Naive thymus-derived CD8-positive, alpha-beta T cell (primary cell): ENCODE measurements at regions of chr21 and their contacts with region 1.

Region 1: GRCh38 chr21:33360881-33361602 is 36.3 kb downstream of the IFNAR1 start:
- DNase-seq: peak; percentile 71 to 89 (median 85)
- ATAC-seq: peak; percentile 70
- H3K4me3 Mint-ChIP-seq: peak overlapping the region; percentile 72 to 92 (median 90)
- H3K27ac Mint-ChIP-seq: peak overlapping the region; percentile 86 to 99 (median 94)
- H3K4me1 Mint-ChIP-seq: peaks cover 10 to 44% (median 20%) of the 10 kb centered on the region in 4 donors
- H3K27me3 Mint-ChIP-seq: peaks cover 0 to 3% (median 0%) of the 10 kb centered on the region in 5 donors

Region 2: GRCh38 chr21:32592929-32593502 is 768.0 kb before region 1 on chr21:
- POLR2A ChIA-PET with region 1: no interaction called
- DNase-seq: no peak
- ATAC-seq: no peak
- H3K4me3 Mint-ChIP-seq: no peak overlapping the region
- H3K27ac Mint-ChIP-seq: peak overlapping the region in 1 of 10 donors; percentile 34
- H3K4me1 Mint-ChIP-seq: no peaks in the 10 kb centered on the region
- H3K27me3 Mint-ChIP-seq: no peaks in the 10 kb centered on the region

Region 3: GRCh38 chr21:33185852-33186251 is 175.2 kb before region 1 on chr21:
- POLR2A ChIA-PET with region 1: interaction called, 14 read pairs
- DNase-seq: peak in 6 of 10 donors; percentile 15 to 71 (median 46)
- ATAC-seq: peak; percentile 96 to 97
- H3K4me3 Mint-ChIP-seq: peak overlapping the region; percentile 26 to 82 (median 72)
- H3K27ac Mint-ChIP-seq: peak overlapping the region; percentile 47 to 95 (median 84)
- H3K4me1 Mint-ChIP-seq: peaks cover 30 to 45% (median 36%) of the 10 kb centered on the region in 4 donors
- H3K27me3 Mint-ChIP-seq: peaks cover 0 to 14% (median 0%) of the 10 kb centered on the region in 5 donors

Region 4: DNA sequence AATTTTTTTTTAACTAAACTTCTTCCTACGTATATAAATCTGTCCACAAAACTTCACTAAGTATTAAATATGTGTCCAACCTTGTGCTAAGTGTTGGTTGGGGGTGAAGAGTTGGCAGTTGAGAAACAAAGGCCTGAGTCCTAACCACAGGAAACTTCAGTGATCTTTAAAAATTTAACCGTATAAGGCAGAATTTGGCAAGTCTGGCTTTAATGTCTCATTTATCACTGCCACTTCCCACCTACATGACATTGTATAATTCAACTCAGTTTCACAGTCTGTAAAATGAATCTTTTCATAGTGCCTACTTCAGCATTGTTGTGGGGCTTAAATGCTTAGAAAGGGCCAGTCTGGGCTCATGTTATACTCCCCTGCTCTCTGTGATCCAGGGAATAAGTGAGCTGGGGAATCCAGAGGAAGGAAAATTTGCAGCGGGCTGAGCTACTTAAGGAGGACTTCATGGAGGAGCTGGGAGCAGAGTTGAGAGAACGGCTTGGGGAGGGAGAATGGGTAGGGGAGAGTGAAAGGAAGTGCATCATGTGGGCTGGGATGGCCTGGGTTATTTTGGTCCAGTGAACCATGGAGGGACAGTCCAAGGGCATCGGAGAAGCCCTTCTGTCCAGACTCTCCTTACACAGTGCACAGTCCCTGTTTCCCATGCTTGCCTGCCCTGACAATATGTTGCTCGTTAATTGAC is 116.8 kb before region 1 on chr21:
- POLR2A ChIA-PET with region 1: interaction called, 11 read pairs
- DNase-seq: no peak
- ATAC-seq: peak; percentile 38 to 51
- H3K4me3 Mint-ChIP-seq: peak overlapping the region in 9 of 10 donors; percentile 11 to 83 (median 67)
- H3K27ac Mint-ChIP-seq: peak overlapping the region; percentile 70 to 96 (median 91)
- H3K4me1 Mint-ChIP-seq: peaks cover 49 to 89% (median 85%) of the 10 kb centered on the region in 4 donors
- H3K27me3 Mint-ChIP-seq: no peaks in the 10 kb centered on the region

Region 5: DNA sequence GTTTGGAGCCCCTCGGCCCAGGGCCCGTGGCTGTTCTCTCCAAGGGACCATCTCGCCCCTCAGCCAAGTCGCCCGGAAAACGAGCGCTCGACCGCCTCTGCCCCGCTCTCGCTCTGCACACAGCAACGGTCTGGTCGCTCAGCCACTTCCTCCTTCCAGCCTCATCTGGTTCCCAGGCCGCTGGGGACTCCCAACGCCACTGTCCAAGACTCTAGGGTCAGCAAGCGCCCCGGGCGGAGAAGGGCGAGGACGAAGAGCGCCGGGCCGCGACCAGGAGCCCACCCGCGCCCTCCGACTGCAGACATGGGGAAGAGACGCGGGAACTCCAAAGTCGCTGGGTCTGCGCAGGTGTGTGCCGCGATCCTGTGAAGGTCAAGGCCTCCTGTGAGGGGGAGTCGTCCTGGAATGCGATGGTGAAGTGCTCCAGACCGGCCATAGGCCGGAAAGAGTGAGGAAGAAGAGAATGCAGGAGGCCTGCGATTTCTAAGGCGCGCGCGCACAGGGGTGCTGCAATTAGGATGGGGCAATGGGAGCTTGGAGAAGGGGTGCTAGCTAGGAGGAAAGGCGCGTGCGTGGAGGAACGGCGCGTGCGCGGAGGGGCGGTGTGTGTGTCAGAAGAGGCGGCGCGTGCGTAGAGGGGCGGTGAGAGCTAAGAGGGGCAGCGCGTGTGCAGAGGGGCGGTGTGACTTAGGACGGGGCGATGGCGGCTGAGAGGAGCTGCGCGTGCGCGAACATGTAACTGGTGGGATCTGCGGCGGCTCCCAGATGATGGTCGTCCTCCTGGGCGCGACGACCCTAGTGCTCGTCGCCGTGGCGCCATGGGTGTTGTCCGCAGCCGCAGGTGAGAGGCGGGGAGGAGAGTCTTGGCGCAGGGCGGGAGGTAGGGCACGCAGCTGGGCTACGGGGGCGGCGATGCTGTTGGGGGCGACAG is 36.5 kb before region 1 on chr21 and contains the start of gene IFNAR1:
- POLR2A ChIA-PET with region 1: interaction called, 75 read pairs
- DNase-seq: peak; percentile 92 to 100 (median 98)
- ATAC-seq: peak; percentile 83 to 84
- H3K4me3 Mint-ChIP-seq: no peak within 1 kb of the TSS
- H3K27ac Mint-ChIP-seq: no peak within 1 kb of the TSS
- H3K4me1 Mint-ChIP-seq: peaks cover 9 to 32% (median 27%) of the 10 kb centered on the region in 4 donors
- H3K27me3 Mint-ChIP-seq: no peaks in the 10 kb centered on the region
- polyA plus RNA-seq, gene IFNAR1: 48.7 to 69.0 (median 51.8) TPM

Region 6: GRCh38 chr21:33403779-33404585 is 42.9 kb after region 1 on chr21:
- POLR2A ChIA-PET with region 1: interaction called, 38 read pairs
- DNase-seq: peak in 5 of 10 donors; percentile 3 to 34 (median 9)
- ATAC-seq: peak; percentile 34 to 35
- H3K4me3 Mint-ChIP-seq: peak overlapping the region; percentile 91 to 97 (median 94)
- H3K27ac Mint-ChIP-seq: peak overlapping the region; percentile 82 to 96 (median 94)
- H3K4me1 Mint-ChIP-seq: peaks cover 15 to 71% (median 52%) of the 10 kb centered on the region in 4 donors
- H3K27me3 Mint-ChIP-seq: peaks cover 0 to 2% (median 0%) of the 10 kb centered on the region in 5 donors

Region 7: DNA sequence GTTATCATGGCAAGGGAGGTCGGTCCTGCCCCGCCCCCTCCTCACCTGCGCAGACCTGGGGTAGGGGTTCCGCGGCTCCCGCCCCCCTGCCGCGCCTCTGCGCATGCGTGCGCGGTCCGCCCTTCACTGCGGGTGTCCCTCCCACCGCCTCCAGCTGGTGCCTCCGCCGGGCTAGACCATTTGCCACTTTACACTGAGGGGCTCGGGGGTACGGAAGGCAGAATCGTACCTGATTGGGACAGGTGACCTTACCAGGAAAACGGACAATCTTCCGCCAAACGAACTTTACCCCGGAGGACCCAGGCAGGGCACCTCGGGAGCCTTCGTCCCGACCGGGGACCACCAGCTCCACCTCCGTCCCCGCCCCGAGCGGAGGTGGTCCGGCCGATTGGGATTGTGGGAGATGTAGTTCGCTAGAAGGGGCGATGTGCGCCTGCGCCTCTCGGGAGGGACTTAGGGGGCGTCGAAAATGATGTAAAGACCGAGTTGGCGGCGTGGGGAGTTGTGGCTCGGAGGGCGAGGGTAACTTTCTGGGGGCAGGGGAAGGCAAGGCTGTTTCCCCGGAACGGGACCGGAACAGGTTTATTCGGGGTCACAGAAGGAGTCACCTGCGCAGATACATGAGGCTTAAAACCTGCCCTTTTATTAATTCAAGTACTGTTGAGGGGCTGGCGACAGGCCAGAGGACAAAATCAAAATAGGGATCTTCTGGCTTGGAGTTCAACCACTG is 130.5 kb after region 1 on chr21 and contains the start of gene DNAJC28:
- POLR2A ChIA-PET with region 1: interaction called, 12 read pairs
- DNase-seq: peak; percentile 93 to 100 (median 96)
- ATAC-seq: peak; percentile 94 to 96
- H3K4me3 Mint-ChIP-seq: peak within 1 kb of the TSS; percentile 85 to 98 (median 91)
- H3K27ac Mint-ChIP-seq: peak within 1 kb of the TSS; percentile 90 to 98 (median 94)
- H3K4me1 Mint-ChIP-seq: peaks cover 5 to 15% (median 10%) of the 10 kb centered on the region in 4 donors
- H3K27me3 Mint-ChIP-seq: no peaks in the 10 kb centered on the region
- polyA plus RNA-seq, gene DNAJC28: 0.89 to 1.8 (median 0.94) TPM